ENCODE measurements at regions of chr2 and their contacts with region 1.

Region 1: GRCh38 chr2:195318440-195319111 is 338.4 kb upstream of the SLC39A10 start:
- DNase-seq: peak; percentile 37
- H3K4me3 ChIP-seq: no peak overlapping the region
- H3K27ac ChIP-seq: no peak overlapping the region
- H3K4me1 ChIP-seq: no peaks in the 10 kb centered on the region
- H3K27me3 ChIP-seq: no peaks in the 10 kb centered on the region
- CTCF ChIP-seq: peak; percentile 18 to 24
- POLR2A ChIP-seq: no peak

Region 2: DNA sequence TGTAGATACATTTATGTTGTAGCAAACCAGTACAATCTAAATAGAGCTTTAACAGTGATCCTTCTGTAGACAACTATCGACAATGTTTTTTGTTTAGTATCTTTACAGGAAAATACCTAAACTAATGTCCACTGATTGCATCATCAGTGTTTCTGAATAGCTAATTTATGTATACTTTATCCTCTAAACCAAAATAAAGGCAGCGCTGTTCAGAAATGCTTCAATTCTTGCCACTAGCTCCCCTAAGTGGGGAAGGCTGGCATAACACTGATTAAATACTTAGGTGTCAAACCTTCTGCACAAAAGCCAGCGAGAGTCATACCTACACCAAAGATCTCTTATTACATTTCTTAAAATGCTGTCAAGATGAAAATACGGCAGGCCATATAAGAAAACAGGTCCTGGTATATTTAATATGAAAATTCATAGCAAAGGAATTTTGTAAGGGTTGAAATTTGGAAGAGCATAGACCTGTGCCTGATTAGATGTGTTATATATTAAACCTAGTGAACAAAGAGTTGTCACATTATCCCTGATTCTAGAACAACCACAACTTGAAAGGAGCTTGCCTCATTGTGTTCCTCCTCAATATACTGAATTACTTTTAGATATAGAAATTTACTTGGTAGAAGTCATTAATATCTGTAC is 1355.0 kb before region 1 on chr2:
- CTCF ChIA-PET with region 1: no interaction called
- POLR2A ChIA-PET with region 1: no interaction called
- dilution Hi-C with region 1: no loop called
- intact Hi-C with region 1: loop called (anchors 5 kb)
- DNase-seq: peak; percentile 65
- H3K4me3 ChIP-seq: no peak overlapping the region
- H3K27ac ChIP-seq: no peak overlapping the region
- H3K4me1 ChIP-seq: no peaks in the 10 kb centered on the region
- H3K27me3 ChIP-seq: no peaks in the 10 kb centered on the region
- CTCF ChIP-seq: peak; percentile 50 to 55
- POLR2A ChIP-seq: no peak

Region 3: GRCh38 chr2:194545978-194546377 is 772.6 kb before region 1 on chr2:
- CTCF ChIA-PET with region 1: interaction called, 6 read pairs
- POLR2A ChIA-PET with region 1: no interaction called
- dilution Hi-C with region 1: no loop called
- intact Hi-C with region 1: loop called (anchors 1 kb)
- DNase-seq: peak; percentile 40
- H3K4me3 ChIP-seq: no peak overlapping the region
- H3K27ac ChIP-seq: no peak overlapping the region
- H3K4me1 ChIP-seq: peaks cover 2% of the 10 kb centered on the region
- H3K27me3 ChIP-seq: no peaks in the 10 kb centered on the region
- CTCF ChIP-seq: peak in 1 of 2 donors; percentile 6
- POLR2A ChIP-seq: no peak

Region 4: DNA sequence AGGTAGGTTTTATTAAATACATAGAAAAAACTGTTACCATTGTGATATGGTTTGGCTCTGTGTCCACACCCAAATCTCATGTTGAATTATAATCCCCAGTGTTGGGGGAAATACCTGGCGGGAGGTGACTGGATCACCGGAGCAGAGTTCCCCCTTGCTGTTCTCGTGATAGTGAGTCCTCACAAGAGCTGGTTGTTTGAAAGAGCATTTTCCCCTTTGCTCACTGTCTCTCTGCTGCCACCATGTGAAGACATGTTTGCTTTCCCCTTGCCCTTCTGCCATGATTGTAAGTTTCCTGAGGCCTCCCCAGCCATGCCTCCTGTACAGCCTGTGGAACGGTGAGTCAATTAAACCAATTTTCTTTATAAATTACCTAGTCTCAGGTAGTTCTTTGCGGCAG is 14.3 kb before region 1 on chr2:
- CTCF ChIA-PET with region 1: no interaction called
- POLR2A ChIA-PET with region 1: no interaction called
- dilution Hi-C with region 1: no loop called
- intact Hi-C with region 1: no loop called
- DNase-seq: peak; percentile 6
- H3K4me3 ChIP-seq: no peak overlapping the region
- H3K27ac ChIP-seq: no peak overlapping the region
- H3K4me1 ChIP-seq: no peaks in the 10 kb centered on the region
- H3K27me3 ChIP-seq: no peaks in the 10 kb centered on the region
- CTCF ChIP-seq: no peak
- POLR2A ChIP-seq: no peak

Region 5: DNA sequence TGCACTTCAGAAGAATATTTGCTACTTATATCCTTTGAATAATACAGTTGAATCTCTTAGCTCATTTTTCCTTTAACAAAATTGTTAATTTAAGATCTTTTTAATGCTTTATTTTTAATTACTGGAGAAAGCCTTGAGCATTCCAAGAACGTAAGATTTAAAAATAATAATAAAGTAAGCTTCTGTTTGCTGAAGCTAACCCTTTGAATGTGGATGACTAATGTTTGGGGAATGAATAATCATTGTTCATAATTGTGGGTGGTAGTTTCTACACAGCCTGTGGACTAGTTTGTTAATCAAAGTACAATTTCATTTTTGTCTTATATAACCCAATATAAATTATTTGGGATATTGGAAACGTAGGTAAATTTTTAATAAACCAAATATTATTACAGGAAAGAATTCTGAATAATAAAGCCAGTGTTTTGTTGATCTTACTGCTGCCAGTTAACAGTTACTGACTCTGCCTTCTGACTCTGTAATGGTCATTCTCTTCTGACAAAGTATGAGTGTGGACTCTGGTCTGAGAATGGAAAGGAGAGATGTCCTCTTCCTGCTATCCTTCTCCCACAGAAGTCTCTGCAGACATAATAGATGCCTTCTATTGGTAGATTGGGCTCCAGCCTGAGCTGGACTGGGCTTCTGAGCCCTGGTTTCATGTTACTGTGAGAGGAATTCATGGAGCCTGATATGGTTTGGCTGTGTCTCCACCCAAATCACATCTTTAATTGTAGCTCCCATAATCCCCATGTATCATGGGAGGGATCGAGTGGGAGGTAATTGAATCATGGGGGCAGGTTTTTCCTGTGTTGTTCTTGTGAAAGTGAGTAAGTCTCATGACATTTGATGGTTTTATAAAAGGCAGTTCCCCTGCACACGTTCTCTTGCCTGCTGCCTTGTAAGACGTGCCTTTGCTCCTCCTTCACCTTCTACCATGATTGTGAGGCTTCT is 45.7 kb after region 1 on chr2:
- CTCF ChIA-PET with region 1: no interaction called
- POLR2A ChIA-PET with region 1: no interaction called
- dilution Hi-C with region 1: no loop called
- intact Hi-C with region 1: no loop called
- DNase-seq: peak; percentile 61
- H3K4me3 ChIP-seq: peak overlapping the region in 1 of 3 experiments; percentile 24
- H3K27ac ChIP-seq: peak overlapping the region; percentile 35
- H3K4me1 ChIP-seq: peaks cover 10% of the 10 kb centered on the region
- H3K27me3 ChIP-seq: no peaks in the 10 kb centered on the region
- CTCF ChIP-seq: no peak
- POLR2A ChIP-seq: no peak

Region 6: DNA sequence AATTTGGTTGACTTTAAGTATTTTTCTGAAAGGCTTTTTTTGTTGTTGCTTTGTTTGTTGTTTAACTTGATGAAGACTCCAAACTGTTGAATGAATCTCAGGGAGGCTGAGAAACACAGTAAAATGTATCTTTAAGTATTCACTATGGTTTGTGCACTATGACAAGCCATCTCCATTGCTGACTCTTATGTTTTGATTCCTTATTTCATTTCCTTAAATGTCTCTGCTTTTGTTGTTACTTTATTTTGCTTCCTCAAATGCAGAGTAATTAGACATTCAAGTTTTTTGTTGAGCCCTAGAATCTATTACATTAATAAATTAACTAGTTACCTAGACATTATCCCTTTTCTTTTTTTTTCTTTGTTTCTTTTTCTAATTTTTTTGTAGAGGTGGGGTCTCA is 292.1 kb after region 1 on chr2:
- CTCF ChIA-PET with region 1: no interaction called
- POLR2A ChIA-PET with region 1: no interaction called
- dilution Hi-C with region 1: no loop called
- intact Hi-C with region 1: no loop called
- DNase-seq: no peak
- H3K4me3 ChIP-seq: no peak overlapping the region
- H3K27ac ChIP-seq: no peak overlapping the region
- H3K4me1 ChIP-seq: peaks cover 4% of the 10 kb centered on the region
- H3K27me3 ChIP-seq: no peaks in the 10 kb centered on the region
- CTCF ChIP-seq: no peak
- POLR2A ChIP-seq: no peak

Region 7: DNA sequence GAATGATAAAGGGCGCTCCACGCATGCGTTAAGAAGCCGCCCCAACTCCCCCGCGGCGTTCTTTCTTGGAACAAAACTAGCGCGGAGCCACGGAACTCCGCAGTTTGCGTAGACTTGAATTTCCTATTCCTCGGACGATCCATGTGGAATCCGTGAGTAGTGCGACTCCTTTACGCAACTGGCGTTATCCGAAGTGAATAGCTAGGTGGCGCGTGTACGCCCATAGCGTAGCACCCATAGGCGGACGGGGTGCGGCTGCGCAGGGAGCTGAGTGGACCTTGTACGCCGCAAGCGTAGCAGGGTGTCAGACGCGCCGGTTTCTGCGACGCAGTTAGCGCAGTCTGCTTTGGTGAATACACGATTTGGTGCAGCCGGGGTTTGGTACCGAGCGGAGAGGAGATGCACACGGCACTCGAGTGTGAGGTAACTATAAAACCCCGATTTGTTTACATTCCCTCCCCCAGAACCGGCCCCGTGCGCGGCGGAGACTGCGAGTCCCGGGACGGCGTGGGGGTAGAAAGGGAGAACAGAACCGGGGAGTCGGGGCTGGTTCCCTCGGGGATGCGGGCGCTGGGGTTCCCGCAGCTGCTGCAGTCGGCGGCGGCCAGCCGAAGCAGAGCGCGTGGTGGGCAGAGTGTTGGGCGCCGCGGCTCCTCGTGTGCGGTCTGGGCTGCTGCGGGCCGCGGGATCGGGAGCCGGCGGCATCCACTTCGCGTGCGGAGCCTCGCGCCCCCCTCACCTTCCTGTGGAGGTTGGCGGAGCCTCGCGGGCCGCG is 338.5 kb after region 1 on chr2 and contains the start of gene SLC39A10:
- CTCF ChIA-PET with region 1: interaction called, 8 read pairs
- POLR2A ChIA-PET with region 1: no interaction called
- dilution Hi-C with region 1: no loop called
- intact Hi-C with region 1: loop called (anchors 5 kb)
- DNase-seq: peak; percentile 100
- H3K4me3 ChIP-seq: peak within 1 kb of the TSS; percentile 50 to 74 (median 71)
- H3K27ac ChIP-seq: peak within 1 kb of the TSS; percentile 84
- H3K4me1 ChIP-seq: peaks cover 26% of the 10 kb centered on the region
- H3K27me3 ChIP-seq: no peaks in the 10 kb centered on the region
- CTCF ChIP-seq: no peak
- POLR2A ChIP-seq: peak; percentile 96
- total RNA-seq, gene SLC39A10: 39.9 and 47.4 TPM in 2 replicates

Region 8: DNA sequence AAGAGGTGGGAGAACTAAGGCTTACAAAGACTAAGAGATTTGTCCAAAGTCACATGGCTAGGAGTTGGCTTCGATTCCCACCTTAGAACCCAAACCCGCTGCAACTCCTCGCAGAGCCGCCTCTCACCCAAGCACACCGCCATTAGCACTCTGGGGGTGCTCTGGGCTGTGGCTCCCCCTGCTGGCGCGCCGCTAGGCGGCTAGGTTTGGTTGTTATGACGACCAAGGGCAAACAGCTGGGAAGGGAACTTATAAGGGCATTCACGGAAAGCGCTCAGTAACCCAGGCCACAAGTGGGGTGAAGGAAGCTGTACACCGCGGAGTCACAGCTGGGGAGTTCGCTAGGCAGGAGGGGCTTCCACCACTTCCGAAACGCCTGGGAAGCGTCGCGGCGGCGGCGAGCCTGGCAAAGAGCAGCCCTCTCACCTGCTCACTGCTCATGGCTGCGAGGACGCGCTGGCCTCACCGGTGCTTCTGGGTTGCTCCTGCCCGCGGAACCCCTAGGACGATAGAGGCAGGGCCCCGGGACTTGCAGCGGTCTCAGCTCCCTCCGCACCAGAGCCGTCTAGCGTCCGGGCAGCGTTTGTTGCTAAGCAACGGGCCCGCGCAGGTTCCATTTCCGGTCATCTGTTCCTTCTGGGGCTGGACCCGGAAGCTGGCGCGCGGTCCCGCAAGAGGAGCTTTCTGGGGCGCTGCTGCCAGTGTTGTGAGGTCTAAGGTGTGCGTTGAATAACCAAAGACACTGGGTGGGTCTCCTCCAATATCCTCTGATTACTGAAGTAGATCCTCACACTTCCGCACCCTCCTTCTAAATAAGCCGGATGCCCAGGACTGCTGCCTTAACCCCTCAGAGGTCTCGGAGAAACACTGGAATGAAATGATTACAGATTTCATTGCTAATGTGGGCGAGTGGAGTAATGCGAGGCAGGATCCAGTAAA is 750.0 kb after region 1 on chr2 and contains the start of gene DNAH7:
- CTCF ChIA-PET with region 1: no interaction called
- POLR2A ChIA-PET with region 1: no interaction called
- dilution Hi-C with region 1: no loop called
- intact Hi-C with region 1: loop called (anchors 5 kb)
- DNase-seq: peak; percentile 86
- H3K4me3 ChIP-seq: peak within 1 kb of the TSS; percentile 7 to 98 (median 52)
- H3K27ac ChIP-seq: peak within 1 kb of the TSS; percentile 27
- H3K4me1 ChIP-seq: peaks cover 5% of the 10 kb centered on the region
- H3K27me3 ChIP-seq: peaks cover 17 to 41% of the 10 kb centered on the region in 2 experiments
- CTCF ChIP-seq: peak; percentile 90 to 99
- POLR2A ChIP-seq: peak; percentile 45
- total RNA-seq, gene DNAH7: 0.05 and 0.24 TPM in 2 replicates